GM10248 (cell line): ENCODE measurements at regions of chr18 and their contacts with region 1.

Region 1: GRCh38 chr18:62982600-62983251 is 267.4 kb downstream of the PHLPP1 start:
- DNase-seq: peak; percentile 80
- CTCF ChIP-seq: peak; percentile 77

Region 2: GRCh38 chr18:62637807-62638687 is 344.7 kb before region 1 on chr18:
- CTCF ChIA-PET with region 1: interaction called, 29 read pairs
- POLR2A ChIA-PET with region 1: no interaction called
- DNase-seq: peak; percentile 72
- CTCF ChIP-seq: peak; percentile 56

Region 3: DNA sequence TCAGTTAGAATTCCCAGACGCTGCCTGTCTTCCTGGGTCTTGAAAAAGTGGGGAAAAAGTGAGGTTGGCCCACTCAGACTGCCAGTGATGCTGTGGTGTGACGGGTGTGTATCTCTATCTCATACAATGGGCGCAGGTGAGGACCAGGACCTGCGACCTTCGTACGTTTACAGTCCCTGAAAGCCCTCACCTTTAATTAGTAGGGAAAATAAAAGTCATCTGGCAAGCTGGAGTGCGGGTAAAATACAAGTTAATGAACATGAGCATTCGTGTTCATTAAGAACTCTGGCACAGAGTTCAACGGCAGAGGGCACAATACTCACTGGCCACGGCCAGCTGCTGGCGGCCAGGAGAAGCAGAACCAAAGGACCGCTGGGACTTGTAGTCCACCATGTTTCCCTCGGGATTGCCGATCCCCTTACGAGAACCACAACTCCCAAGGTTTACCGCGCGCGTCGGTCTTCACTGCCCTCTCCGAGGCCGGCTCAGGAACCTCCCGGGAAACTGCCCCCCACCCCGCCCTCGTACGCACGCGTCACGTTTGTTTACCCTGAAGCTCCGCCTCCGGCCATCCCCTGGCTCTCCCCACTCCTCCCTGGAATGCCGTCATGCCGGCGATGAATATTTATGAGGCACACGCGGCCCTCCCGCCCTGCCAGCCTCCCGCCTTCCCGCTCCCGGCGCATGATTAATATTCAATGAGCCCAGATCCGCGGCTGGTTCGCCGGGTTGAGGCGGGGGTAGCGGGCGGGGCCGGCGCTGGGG is 267.9 kb before region 1 on chr18:
- CTCF ChIA-PET with region 1: interaction called, 29 read pairs
- POLR2A ChIA-PET with region 1: no interaction called
- DNase-seq: peak; percentile 94
- CTCF ChIP-seq: peak; percentile 77

Region 4: GRCh38 chr18:62963507-62963906 is 19.2 kb before region 1 on chr18:
- CTCF ChIA-PET with region 1: interaction called, 15 read pairs
- POLR2A ChIA-PET with region 1: no interaction called
- DNase-seq: no peak
- CTCF ChIP-seq: no peak

Region 5: DNA sequence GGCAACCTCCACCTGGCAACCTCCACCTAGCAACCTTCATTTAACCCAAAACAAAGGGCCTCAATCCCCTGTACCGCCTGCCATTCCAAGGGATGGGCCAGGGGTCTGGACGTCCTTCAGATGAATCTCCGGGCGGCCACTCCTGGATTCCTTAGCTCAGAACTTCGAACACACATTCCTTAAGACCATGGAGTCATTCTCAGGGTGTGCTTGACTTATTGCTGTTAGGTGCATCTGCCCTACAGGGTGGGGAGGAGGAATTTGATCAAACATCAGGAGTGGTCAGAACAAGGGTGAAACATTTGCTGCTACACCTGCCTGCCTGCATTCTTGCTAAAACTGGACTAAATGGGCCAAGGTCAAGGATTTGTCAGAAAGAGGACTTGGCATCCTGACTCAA is 10.2 kb after region 1 on chr18:
- CTCF ChIA-PET with region 1: interaction called, 17 read pairs
- POLR2A ChIA-PET with region 1: no interaction called
- DNase-seq: no peak
- CTCF ChIP-seq: no peak